ENCODE measurements at regions of chr3 and their contacts with region 1.

Region 1: GRCh38 chr3:39434574-39434973 is 28.1 kb downstream of the RPSA start:
- DNase-seq: no peak
- ATAC-seq: no peak; a peak in 1 of 6 replicates
- H3K4me3 ChIP-seq: no peak overlapping the region
- H3K27ac ChIP-seq: no peak overlapping the region
- H3K4me1 ChIP-seq: no peaks in the 10 kb centered on the region
- CTCF ChIP-seq: no peak
- EP300 ChIP-seq: no peak
- POLR2A ChIP-seq: no peak
- RAD21 ChIP-seq: no peak

Region 2: DNA sequence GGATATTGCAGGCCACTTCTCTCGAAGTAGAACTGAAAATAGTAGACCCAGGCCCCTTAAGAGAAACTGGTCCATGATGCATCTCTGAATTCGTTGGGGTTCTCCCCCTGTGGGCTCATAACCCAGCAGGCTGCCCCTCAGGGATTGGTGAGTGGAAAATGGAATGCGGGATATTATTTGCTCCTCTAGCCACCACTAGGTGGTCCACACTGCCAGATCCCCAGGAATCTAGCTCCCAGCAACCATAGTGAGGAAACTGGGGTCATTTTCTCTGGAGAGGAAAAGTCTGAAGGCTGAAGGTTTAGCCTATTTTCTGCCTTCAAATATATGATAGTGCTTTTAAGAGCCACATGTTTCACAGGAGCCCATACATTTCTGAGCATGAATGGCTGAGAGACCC is 161.5 kb before region 1 on chr3:
- CTCF ChIA-PET with region 1: no interaction called
- POLR2A ChIA-PET with region 1: no interaction called
- DNase-seq: no peak
- ATAC-seq: peak in 1 of 2 experiments; percentile 67; a peak in 2 of 6 replicates
- H3K4me3 ChIP-seq: no peak overlapping the region
- H3K27ac ChIP-seq: no peak overlapping the region
- H3K4me1 ChIP-seq: no peaks in the 10 kb centered on the region
- CTCF ChIP-seq: 0 out of 3 replicates have a peak, but pooled peaks have one; percentile 8
- EP300 ChIP-seq: no peak
- POLR2A ChIP-seq: no peak
- RAD21 ChIP-seq: no peak

Region 3: GRCh38 chr3:39414421-39414907 is 20.1 kb before region 1 on chr3:
- CTCF ChIA-PET with region 1: interaction called, 10 read pairs
- POLR2A ChIA-PET with region 1: no interaction called
- DNase-seq: peak in 1 of 2 experiments; percentile 22
- ATAC-seq: peak; percentile 12 to 21
- H3K4me3 ChIP-seq: no peak overlapping the region
- H3K27ac ChIP-seq: 0 out of 6 replicates have a peak overlapping the region, but pooled peaks of 1 of the 2 experiments have one; percentile 4
- H3K4me1 ChIP-seq: peaks cover 30% of the 10 kb centered on the region
- CTCF ChIP-seq: no peak
- EP300 ChIP-seq: no peak
- POLR2A ChIP-seq: no peak
- RAD21 ChIP-seq: no peak

Region 4: DNA sequence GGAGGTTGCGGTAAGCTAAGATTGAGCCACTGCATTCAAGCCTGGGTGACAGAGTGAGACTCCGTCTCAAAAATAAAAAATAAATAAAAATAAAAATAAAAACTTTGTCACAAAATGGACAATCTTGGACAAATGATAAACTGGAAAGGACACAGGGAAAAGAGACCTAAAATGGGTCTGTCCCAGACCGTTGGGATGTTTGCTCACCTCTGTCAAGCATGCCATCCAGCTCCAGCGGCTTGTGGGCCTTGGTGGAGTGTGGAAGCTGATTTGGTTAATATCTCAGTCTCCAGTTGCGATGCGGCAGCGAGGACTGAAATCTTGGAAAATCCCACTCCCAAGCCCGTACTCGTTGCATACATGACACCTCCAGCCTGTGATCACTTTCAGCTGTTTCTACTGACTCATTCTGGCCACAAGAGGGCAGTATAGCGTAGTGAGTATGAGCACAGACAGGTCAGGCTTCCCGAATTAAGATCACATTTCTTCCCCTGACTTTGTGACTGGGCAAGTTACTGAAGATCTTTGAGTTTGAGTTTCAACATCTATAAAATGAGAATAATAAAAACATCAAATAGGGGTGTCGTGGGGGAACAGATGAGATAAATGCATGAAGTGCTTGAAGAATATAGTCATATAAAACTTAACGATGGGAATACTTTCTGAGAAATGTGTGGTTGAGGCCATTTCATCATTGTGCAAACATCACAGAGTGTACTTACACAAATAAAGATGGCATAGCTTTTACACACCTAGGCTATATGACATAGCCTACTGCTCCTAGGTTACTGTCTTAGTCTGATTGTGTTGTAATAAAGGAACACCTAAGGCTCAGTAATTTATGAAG is 13.3 kb after region 1 on chr3:
- CTCF ChIA-PET with region 1: interaction called, 17 read pairs
- POLR2A ChIA-PET with region 1: no interaction called
- DNase-seq: peak; percentile 81 to 88
- ATAC-seq: peak; percentile 93 to 98
- H3K4me3 ChIP-seq: no peak overlapping the region
- H3K27ac ChIP-seq: no peak overlapping the region
- H3K4me1 ChIP-seq: no peaks in the 10 kb centered on the region
- CTCF ChIP-seq: peak; percentile 87
- EP300 ChIP-seq: no peak
- POLR2A ChIP-seq: no peak
- RAD21 ChIP-seq: peak; percentile 74 to 81